Left lung (tissue), 14 donors: ENCODE measurements at regions of chr1 and their contacts with region 1.

Region 1: DNA sequence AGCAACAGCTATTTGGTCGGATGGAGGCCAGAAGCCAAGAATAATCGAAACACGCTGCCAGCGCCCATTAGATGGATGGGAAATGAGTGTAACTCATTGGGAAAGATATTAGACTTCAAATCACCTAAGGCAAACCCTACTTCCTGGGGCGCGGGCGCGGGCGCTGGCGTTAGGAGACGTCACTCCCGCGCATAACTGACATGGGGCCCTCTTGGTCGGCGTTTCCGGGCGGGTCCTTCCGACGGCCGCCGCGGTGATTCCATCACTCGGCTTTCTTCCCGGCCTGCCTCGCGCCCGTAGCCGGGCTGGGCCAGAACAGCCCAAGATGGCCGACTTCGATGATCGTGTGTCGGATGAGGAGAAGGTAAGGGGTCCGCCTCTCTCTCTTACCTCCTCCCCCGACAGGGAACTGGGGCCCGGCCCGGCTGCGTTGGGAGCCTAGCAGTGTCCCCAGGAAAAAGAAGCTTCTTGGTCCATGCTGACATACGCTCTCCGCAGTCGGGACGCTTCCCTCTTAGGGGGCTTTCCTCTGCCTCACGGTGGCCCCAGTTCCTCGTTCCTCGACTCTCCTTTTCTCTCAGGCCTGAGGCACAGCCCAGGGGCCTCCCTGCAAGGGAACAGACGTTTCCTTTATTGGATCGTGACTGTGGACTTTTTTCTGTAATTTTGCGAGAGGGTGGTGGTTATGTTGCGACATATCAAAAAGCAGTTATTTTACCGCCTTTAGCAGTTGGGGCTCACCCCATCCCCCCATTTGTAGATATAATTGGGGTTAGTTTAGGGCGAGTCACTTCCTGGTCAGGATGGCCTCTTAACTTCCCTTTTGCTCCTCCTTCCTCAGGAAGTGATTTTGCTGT is at the start of gene CAPZA1:
- DNase-seq: peak; percentile 90 to 97 (median 95)
- ATAC-seq: peak; percentile 97
- H3K4me3 ChIP-seq: peak within 1 kb of the TSS; percentile 86 to 89
- H3K27ac ChIP-seq: peak within 1 kb of the TSS; percentile 98 to 99
- H3K4me1 ChIP-seq: peaks cover 26 to 60% of the 10 kb centered on the region in 2 donors
- H3K27me3 ChIP-seq: no peaks in the 10 kb centered on the region
- CTCF ChIP-seq: no peak
- polyA plus RNA-seq, gene CAPZA1: 135 to 154 (median 146) TPM

Region 2: GRCh38 chr1:112390775-112391602 is 228.8 kb before region 1 on chr1:
- intact Hi-C with region 1: no loop called
- DNase-seq: peak in 3 of 4 donors; percentile 86 to 94 (median 87)
- ATAC-seq: peak; percentile 91
- H3K4me3 ChIP-seq: peak overlapping the region; percentile 37 to 38
- H3K27ac ChIP-seq: peak overlapping the region; percentile 80 to 81
- H3K4me1 ChIP-seq: peaks cover 24 to 48% of the 10 kb centered on the region in 2 donors
- H3K27me3 ChIP-seq: no peaks in the 10 kb centered on the region
- CTCF ChIP-seq: peak; percentile 89 to 95

Region 3: DNA sequence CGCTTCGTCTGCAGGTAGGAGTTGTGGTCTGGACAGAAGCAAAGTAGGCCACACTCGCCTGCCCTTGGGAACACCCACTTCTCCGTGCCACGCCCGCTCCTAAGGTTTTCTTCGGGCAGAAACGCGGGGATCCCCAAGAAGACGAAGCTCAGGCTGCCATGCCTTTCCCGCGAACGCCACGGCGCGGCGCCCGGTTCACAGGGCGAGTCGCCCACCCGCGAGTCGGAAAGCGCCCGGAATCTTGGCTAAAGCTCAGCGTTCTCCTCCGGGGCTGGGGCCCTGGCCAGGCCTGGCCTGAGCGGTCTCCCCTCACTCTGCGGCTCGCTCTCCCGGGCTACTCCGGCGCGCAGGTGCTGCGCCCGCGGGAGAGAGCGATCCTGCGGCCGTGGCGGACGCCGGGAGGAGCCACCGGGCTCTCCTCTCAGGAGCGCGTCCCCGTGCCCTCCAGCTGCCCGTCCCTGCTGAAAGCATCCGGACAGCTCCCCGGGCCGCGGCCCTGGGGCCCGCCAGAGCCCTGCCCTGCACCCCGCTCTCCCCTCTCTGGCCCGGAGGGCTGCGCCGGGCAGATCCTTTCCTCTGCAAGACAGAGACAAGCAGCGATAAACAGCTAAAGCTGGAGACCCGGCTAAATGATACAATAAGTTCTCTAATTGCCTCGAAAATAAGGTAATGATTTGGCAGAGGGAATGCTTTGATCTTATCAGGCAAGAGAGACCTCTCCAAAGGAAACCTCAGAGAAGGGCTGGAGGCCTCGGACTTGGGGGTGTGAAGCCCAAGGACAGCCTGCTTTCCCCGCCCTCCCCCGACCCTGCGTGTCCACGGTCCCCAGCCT is 117.7 kb before region 1 on chr1:
- intact Hi-C with region 1: loop called in 1 of 2 experiments (anchors 10 kb)
- DNase-seq: peak; percentile 63 to 89 (median 74)
- ATAC-seq: peak; percentile 89
- H3K4me3 ChIP-seq: peak overlapping the region; percentile 27 to 40
- H3K27ac ChIP-seq: no peak overlapping the region
- H3K4me1 ChIP-seq: peaks cover 4 to 17% of the 10 kb centered on the region in 2 donors
- H3K27me3 ChIP-seq: peaks cover 3 to 70% of the 10 kb centered on the region in 2 donors
- CTCF ChIP-seq: peak; percentile 41 to 71

Region 4: GRCh38 chr1:112674439-112674985 is 54.8 kb after region 1 on chr1 and contains the start of gene MOV10:
- intact Hi-C with region 1: loop called in 1 of 2 experiments (anchors 10 kb)
- DNase-seq: peak; percentile 78 to 92 (median 78)
- ATAC-seq: peak; percentile 75
- H3K4me3 ChIP-seq: peak within 1 kb of the TSS; percentile 89 to 90
- H3K27ac ChIP-seq: peak within 1 kb of the TSS; percentile 90 to 95
- H3K4me1 ChIP-seq: peaks cover 0 to 42% of the 10 kb centered on the region in 2 donors
- H3K27me3 ChIP-seq: no peaks in the 10 kb centered on the region
- CTCF ChIP-seq: no peak
- polyA plus RNA-seq, gene MOV10: 69.5 to 81.3 (median 75.0) TPM

Region 5: GRCh38 chr1:112706908-112707663 is 87.3 kb after region 1 on chr1 and contains the start of gene RHOC:
- intact Hi-C with region 1: loop called in 1 of 2 experiments (anchors 10 kb)
- DNase-seq: peak; percentile 83 to 96 (median 90)
- ATAC-seq: peak; percentile 86
- H3K4me3 ChIP-seq: peak within 1 kb of the TSS; percentile 91 to 96
- H3K27ac ChIP-seq: peak within 1 kb of the TSS; percentile 87 to 93
- H3K4me1 ChIP-seq: peaks cover 30 to 46% of the 10 kb centered on the region in 2 donors
- H3K27me3 ChIP-seq: peaks cover 0 to 26% of the 10 kb centered on the region in 2 donors
- CTCF ChIP-seq: peak; percentile 88 to 91
- polyA plus RNA-seq, gene RHOC: 204 to 259 (median 210) TPM